Right cardiac atrium (tissue), 5 donors: ENCODE measurements at regions of chr16 and their contacts with region 1.

Region 1: GRCh38 chr16:19645557-19645981 is 72.5 kb downstream of the KNOP1 start:
- DNase-seq: peak; percentile 65 to 86 (median 74)
- ATAC-seq: peak; percentile 76 to 84
- H3K4me3 ChIP-seq: no peak overlapping the region
- H3K27ac ChIP-seq: peak overlapping the region; percentile 80
- H3K4me1 ChIP-seq: peaks cover 5% of the 10 kb centered on the region
- H3K27me3 ChIP-seq: no peaks in the 10 kb centered on the region

Region 2: GRCh38 chr16:19563377-19563776 is 82.2 kb before region 1 on chr16:
- intact Hi-C with region 1: loop called in 1 of 4 experiments (anchors 10 kb)
- DNase-seq: no peak
- ATAC-seq: no peak
- H3K4me3 ChIP-seq: no peak overlapping the region
- H3K27ac ChIP-seq: no peak overlapping the region
- H3K4me1 ChIP-seq: no peaks in the 10 kb centered on the region
- H3K27me3 ChIP-seq: no peaks in the 10 kb centered on the region

Region 3: DNA sequence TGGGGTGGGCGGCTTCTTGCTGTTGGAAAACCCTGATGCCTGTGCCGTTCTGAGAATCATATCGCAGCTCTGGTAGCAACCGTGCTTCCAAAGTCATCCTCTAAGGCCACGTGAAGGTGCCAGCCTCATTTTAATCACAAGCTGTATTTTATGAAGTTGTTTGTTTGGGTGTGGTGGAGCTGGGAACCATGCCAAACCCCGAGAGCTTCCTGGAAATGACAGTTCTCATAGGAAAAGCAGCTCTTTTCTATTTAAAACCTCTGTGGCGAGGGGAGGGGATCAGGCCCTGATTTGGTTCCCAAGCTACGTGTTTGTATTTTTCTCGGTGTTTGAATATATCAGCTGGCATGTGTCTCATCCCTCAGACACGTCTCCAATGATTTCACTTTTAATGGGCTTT is 50.8 kb after region 1 on chr16:
- intact Hi-C with region 1: loop called in 1 of 4 experiments (anchors 10 kb)
- DNase-seq: peak; percentile 83 to 90 (median 84)
- ATAC-seq: peak; percentile 66 to 73
- H3K4me3 ChIP-seq: no peak overlapping the region
- H3K27ac ChIP-seq: peak overlapping the region; percentile 98
- H3K4me1 ChIP-seq: peaks cover 18% of the 10 kb centered on the region
- H3K27me3 ChIP-seq: no peaks in the 10 kb centered on the region